Left cardiac atrium (tissue), 4 donors: ENCODE measurements at regions of chr1 and their contacts with region 1.

Region 1: GRCh38 chr1:21963477-21964217 is 13.2 kb upstream of the CELA3B start:
- DNase-seq: peak; percentile 78
- ATAC-seq: peak; percentile 89 to 91

Region 2: DNA sequence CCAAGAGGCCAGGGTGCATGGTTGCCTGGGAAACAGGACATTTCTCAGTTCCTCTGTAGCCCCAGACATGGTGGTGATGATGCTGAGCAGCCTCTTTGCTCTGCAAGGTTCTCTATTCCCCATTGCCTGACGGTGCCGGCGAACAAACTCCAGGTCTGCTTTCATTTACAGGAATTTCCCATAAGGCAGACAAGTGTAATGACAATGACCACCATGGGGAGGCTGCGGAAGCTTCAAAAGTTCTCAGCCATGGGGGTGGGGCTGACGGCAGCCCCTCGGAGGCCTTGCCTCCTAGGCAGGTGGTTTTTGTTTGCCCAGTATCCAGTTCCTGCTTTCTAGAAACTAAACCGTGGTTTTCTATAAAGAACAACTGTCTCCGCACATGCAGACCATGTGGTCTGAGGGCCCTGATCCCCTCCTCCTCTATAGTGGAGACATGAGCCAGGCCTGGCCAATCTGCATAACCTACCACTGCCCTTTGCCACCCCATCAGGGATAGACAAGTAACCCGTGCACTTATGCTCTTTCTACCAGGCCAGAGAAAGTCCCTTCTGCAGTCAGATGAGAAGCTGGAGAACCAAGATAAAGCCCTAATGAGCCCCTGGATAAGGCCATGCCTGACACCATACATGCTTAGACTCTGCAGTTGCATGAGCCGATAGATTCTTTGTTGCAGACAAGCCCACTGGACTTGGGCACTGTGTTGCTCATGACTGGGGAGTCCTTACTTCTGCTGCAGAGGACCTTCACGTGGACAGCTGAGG is 97.5 kb before region 1 on chr1:
- intact Hi-C with region 1: loop called in 1 of 2 experiments (anchors 5 kb)
- DNase-seq: no peak
- ATAC-seq: no peak

Region 3: GRCh38 chr1:21911205-21912001 is 52.2 kb before region 1 on chr1:
- intact Hi-C with region 1: no loop called
- DNase-seq: peak; percentile 70
- ATAC-seq: peak; percentile 57 to 58